ENCODE measurements at regions of chr11 and their contacts with region 1.

Region 1: DNA sequence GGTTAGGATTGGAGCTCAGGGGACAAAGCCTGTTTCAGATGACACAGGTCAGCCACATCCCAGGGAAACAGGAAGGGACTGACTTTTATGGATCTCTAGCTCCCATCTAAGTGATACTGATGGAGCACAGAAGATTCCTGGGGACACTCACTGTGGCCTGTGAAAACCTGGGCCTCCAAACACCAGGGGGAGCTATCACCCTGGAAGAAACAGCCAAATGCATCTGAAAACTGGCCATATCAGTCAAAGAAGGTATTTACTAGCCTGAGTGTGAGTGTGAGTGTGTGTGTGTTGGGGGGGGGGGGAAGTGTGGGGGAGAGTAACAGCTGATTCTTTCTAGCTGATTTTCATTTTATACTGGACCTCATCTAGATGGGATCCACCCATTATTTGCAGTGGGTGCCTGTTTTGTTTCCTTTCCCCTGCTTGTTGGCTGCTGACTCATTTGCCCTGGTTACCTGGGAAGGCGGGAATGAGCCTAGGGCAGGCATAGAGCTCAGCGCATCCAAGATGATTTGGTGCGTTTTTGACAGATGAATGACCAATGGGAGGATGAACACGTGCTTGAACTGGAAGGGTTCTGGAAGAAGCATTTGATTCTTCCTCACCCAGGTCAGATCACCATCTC is 284.0 kb downstream of the KIRREL3 start:
- DNase-seq: peak; percentile 75
- H3K4me3 ChIP-seq: no peak overlapping the region; a peak in 1 of 4 replicates
- H3K27ac ChIP-seq: no peak overlapping the region
- H3K4me1 ChIP-seq: no peaks in the 10 kb centered on the region; a peak in 1 of 4 replicates
- H3K27me3 ChIP-seq: no peaks in the 10 kb centered on the region
- CTCF ChIP-seq: peak; percentile 75
- EP300 ChIP-seq: no peak
- RAD21 ChIP-seq: peak; percentile 85

Region 2: GRCh38 chr11:126440792-126441514 is 275.6 kb before region 1 on chr11:
- CTCF ChIA-PET with region 1: interaction called, 11 read pairs
- POLR2A ChIA-PET with region 1: no interaction called
- DNase-seq: peak; percentile 94
- H3K4me3 ChIP-seq: no peak overlapping the region; a peak in 1 of 4 replicates
- H3K27ac ChIP-seq: no peak overlapping the region
- H3K4me1 ChIP-seq: peaks cover 0 to 20% of the 10 kb centered on the region in 2 experiments; a peak in 1 of 4 replicates
- H3K27me3 ChIP-seq: no peaks in the 10 kb centered on the region
- CTCF ChIP-seq: peak; percentile 95
- EP300 ChIP-seq: no peak
- RAD21 ChIP-seq: peak; percentile 96

Region 3: GRCh38 chr11:126687477-126687876 is 29.1 kb before region 1 on chr11:
- CTCF ChIA-PET with region 1: interaction called, 13 read pairs
- POLR2A ChIA-PET with region 1: no interaction called
- DNase-seq: no peak
- H3K4me3 ChIP-seq: no peak overlapping the region
- H3K27ac ChIP-seq: no peak overlapping the region
- H3K4me1 ChIP-seq: no peaks in the 10 kb centered on the region
- H3K27me3 ChIP-seq: no peaks in the 10 kb centered on the region
- CTCF ChIP-seq: no peak
- EP300 ChIP-seq: no peak
- RAD21 ChIP-seq: no peak

Region 4: DNA sequence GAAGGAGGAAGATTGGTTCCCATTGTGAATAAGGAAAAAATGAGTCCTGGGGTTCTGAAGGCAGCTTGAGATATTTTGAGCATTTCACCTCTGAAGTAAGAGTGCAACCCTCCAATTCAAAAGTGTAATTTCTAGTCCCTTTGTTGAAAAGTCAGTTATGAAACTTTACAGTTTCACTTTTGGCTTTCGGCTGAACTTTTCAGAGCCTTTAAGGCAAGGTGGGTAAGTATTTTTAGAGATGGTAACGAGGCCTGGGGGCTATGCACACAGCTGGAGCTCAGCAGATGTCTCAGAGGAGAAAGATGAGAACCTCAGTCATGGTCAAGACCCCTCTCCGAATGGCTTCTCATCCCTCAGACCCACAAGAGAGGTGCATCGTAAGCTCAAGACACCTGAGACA is 16.4 kb after region 1 on chr11:
- CTCF ChIA-PET with region 1: interaction called, 63 read pairs
- POLR2A ChIA-PET with region 1: no interaction called
- DNase-seq: no peak
- H3K4me3 ChIP-seq: no peak overlapping the region
- H3K27ac ChIP-seq: no peak overlapping the region
- H3K4me1 ChIP-seq: no peaks in the 10 kb centered on the region
- H3K27me3 ChIP-seq: no peaks in the 10 kb centered on the region
- CTCF ChIP-seq: no peak
- EP300 ChIP-seq: no peak
- RAD21 ChIP-seq: no peak

Region 5: GRCh38 chr11:126748100-126748791 is 31.7 kb after region 1 on chr11:
- CTCF ChIA-PET with region 1: interaction called, 18 read pairs
- POLR2A ChIA-PET with region 1: no interaction called
- DNase-seq: no peak
- H3K4me3 ChIP-seq: no peak overlapping the region
- H3K27ac ChIP-seq: no peak overlapping the region
- H3K4me1 ChIP-seq: no peaks in the 10 kb centered on the region
- H3K27me3 ChIP-seq: no peaks in the 10 kb centered on the region
- CTCF ChIP-seq: no peak
- EP300 ChIP-seq: no peak
- RAD21 ChIP-seq: no peak